Heart right ventricle (tissue), 16 donors: ENCODE measurements at regions of chr1 and their contacts with region 1.

Region 1: DNA sequence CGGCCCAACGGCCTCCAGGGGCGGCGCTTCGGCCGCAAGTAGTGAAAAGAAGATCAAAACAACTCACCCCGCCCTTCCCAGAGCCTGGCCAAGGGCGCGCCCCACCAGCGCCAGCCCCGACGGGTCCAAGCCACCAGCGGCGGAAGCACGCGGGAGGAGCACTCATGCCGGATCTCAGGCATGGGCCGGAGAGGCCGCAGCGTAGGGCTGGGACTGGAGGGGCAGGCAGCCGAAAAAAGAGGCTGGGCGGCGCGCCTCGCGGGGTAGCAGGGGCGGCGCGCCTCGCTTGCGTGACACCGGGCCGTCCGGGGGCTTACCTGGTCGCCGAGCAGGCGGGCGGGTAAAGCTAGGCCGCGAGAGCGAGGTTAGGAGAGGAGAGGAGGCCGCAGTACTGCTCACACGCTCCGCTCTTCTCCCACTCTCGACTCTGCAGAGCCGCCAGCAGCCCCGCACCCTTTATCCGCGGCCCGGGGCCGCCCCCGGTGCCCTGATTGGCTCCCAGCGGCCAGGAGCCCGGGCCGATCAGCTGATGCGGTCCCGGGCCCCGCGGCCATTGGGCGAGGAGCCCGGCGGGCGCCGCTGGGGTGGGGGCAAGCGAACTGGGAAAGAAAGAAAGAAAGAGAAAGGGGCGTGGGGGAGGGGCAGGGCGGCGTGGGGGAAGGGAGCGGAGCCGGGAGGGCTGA is at the start of gene GLUL:
- DNase-seq: peak; percentile 93 to 96
- ATAC-seq: peak; percentile 92 to 96 (median 93)
- H3K4me3 ChIP-seq: peak within 1 kb of the TSS; percentile 65 to 99 (median 90)
- H3K27ac ChIP-seq: peak within 1 kb of the TSS; percentile 95 to 100 (median 99)
- H3K4me1 ChIP-seq: peaks cover 7 to 66% (median 49%) of the 10 kb centered on the region in 9 donors
- H3K27me3 ChIP-seq: no peaks in the 10 kb centered on the region
- CTCF ChIP-seq: peak in 5 of 9 donors; percentile 14 to 41 (median 23)
- total RNA-seq, gene GLUL: 248 to 589 (median 409) TPM

Region 2: DNA sequence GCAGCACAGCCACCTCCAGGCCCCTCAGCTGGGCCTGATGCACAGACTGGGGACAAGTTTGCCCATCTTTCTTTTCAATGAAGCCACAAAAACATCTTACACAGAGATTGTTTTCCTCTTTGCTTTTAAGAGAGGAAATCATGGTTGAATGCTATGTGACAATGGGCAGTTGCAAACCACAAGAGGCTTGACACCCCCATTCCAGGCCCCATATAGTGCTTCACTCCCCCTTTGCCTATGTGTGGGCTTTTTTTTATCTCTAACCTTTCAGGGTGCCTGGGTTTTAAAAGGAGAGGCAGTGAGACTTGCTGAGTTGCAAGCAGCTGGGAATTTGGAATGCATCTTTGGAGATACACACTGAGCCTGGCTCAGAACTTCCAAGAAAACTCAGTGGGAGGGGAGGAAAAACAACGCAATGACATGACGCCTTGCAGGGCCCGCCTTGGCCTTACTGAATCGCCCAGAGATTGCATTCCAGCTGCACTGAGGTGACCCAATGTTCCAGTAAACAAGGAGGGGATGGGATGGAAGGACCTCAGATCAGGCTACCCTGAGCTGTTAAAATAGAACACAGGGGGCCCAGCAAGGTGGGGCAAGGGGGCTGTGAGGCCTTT is 184.8 kb before region 1 on chr1:
- intact Hi-C with region 1: loop called in 1 of 10 experiments (anchors 10 kb)
- DNase-seq: peak; percentile 42 to 66
- ATAC-seq: peak; percentile 77 to 93 (median 86)
- H3K4me3 ChIP-seq: no peak overlapping the region
- H3K27ac ChIP-seq: peak overlapping the region in 9 of 10 donors; percentile 16 to 73 (median 54)
- H3K4me1 ChIP-seq: peaks cover 0 to 13% (median 6%) of the 10 kb centered on the region in 9 donors
- H3K27me3 ChIP-seq: no peaks in the 10 kb centered on the region
- CTCF ChIP-seq: no peak

Region 3: GRCh38 chr1:182235952-182236650 is 155.4 kb before region 1 on chr1:
- intact Hi-C with region 1: loop called in 1 of 10 experiments (anchors 10 kb)
- DNase-seq: peak; percentile 28 to 51
- ATAC-seq: peak; percentile 49 to 96 (median 93)
- H3K4me3 ChIP-seq: no peak overlapping the region
- H3K27ac ChIP-seq: peak overlapping the region in 6 of 10 donors; percentile 17 to 71 (median 40)
- H3K4me1 ChIP-seq: peaks cover 0 to 31% (median 4%) of the 10 kb centered on the region in 9 donors
- H3K27me3 ChIP-seq: no peaks in the 10 kb centered on the region
- CTCF ChIP-seq: no peak

Region 4: GRCh38 chr1:182291584-182292192 is 99.8 kb before region 1 on chr1:
- intact Hi-C with region 1: loop called in 1 of 10 experiments (anchors 2 kb)
- DNase-seq: no peak
- ATAC-seq: peak in 7 of 8 donors; percentile 34 to 75 (median 61)
- H3K4me3 ChIP-seq: no peak overlapping the region
- H3K27ac ChIP-seq: peak overlapping the region in 3 of 10 donors; percentile 0 to 20 (median 15)
- H3K4me1 ChIP-seq: peaks cover 4 to 40% (median 19%) of the 10 kb centered on the region in 9 donors
- H3K27me3 ChIP-seq: no peaks in the 10 kb centered on the region
- CTCF ChIP-seq: no peak

Region 5: GRCh38 chr1:182301467-182302198 is 89.9 kb before region 1 on chr1:
- intact Hi-C with region 1: loop called in 6 of 10 experiments (anchors 2 to 10 kb)
- DNase-seq: peak; percentile 37 to 48
- ATAC-seq: peak; percentile 75 to 89 (median 82)
- H3K4me3 ChIP-seq: no peak overlapping the region
- H3K27ac ChIP-seq: peak overlapping the region in 5 of 10 donors; percentile 21 to 58 (median 45)
- H3K4me1 ChIP-seq: peaks cover 0 to 46% (median 5%) of the 10 kb centered on the region in 9 donors
- H3K27me3 ChIP-seq: no peaks in the 10 kb centered on the region
- CTCF ChIP-seq: peak in 3 of 9 donors; percentile 17 to 36 (median 36)

Region 6: GRCh38 chr1:182348961-182349747 is 42.3 kb before region 1 on chr1:
- intact Hi-C with region 1: loop called in 2 of 10 experiments (anchors 2 to 5 kb)
- DNase-seq: peak; percentile 18 to 71
- ATAC-seq: peak; percentile 76 to 98 (median 95)
- H3K4me3 ChIP-seq: no peak overlapping the region
- H3K27ac ChIP-seq: peak overlapping the region in 9 of 10 donors; percentile 23 to 87 (median 80)
- H3K4me1 ChIP-seq: peaks cover 0 to 20% (median 3%) of the 10 kb centered on the region in 9 donors
- H3K27me3 ChIP-seq: no peaks in the 10 kb centered on the region
- CTCF ChIP-seq: no peak

Region 7: DNA sequence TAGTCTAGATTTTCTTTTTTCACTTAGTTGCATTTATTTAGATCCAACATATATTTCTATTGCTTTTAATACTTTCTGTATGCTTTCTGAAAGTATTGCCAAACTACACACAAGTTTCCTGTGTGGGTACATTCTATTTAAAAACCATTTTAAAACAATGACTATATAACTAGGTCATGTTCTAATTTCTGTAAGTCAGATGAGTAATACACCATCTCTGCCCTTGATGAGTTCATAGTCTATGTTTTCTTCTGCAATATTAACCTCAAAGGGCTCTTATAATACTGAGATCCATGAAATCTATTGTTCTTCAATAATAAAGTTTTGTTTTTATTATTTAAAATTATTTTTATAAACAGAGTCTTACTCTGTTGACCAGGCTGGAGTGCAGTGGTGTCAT is 129.2 kb after region 1 on chr1:
- intact Hi-C with region 1: no loop called
- DNase-seq: no peak
- ATAC-seq: no peak
- H3K4me3 ChIP-seq: no peak overlapping the region
- H3K27ac ChIP-seq: no peak overlapping the region
- H3K4me1 ChIP-seq: peaks cover 0 to 3% (median 0%) of the 10 kb centered on the region in 9 donors
- H3K27me3 ChIP-seq: no peaks in the 10 kb centered on the region
- CTCF ChIP-seq: no peak